ENCODE measurements at regions of chr13 and their contacts with region 1.

Region 1: DNA sequence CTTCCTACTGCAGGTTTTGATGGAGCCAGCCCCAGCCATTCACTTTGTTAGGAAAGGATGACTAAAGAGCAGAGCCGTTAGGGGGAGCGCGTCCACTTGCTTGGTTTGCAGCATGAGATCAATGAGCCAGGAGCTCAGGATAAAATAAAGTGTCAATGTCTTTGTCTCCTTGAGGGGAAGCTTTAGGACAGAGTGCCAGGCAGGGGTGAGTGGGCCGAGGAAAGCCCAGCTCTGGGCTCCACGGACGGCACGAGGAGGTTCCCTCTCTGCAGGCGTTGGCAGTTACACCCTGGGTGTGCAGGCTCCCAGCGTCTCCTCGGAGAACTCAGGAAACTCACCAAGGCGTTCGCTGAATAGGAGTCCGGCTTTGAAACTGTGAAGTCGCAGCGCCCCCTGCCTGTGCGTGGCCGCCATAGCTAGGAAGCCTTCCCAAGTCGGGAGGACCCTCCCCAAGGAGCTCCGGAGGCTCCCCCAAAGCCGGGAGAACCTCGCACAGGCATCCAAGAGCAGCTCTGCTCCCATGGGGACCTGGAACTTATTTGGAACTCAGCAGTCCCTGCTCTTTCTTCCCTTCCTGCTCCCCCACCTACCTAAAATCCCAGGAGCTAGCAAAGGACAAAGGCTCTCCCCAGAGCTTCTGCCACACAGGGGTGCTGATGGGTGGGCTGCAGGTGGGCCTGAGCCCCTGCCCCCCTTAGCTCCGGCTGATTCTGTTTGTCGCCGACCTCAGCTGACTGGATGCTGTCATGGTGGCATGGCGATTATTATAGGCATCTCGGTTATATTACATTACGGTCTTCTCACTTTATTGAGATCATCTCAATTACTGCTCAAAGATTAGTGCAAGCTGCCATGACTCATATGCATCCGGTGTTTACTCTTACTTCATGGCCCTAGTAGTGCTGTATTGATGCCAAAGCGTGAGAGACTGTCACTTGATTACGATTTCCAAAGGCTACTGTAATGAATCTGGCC is 34.4 kb downstream of the GSX1 start:
- DNase-seq: peak; percentile 43 to 70 (median 52)
- H3K4me3 ChIP-seq: no peak overlapping the region
- H3K4me3 Mint-ChIP-seq: no peak overlapping the region
- H3K27ac ChIP-seq: no peak overlapping the region
- H3K27ac Mint-ChIP-seq: no peak overlapping the region
- H3K4me1 ChIP-seq: peaks cover 11% of the 10 kb centered on the region
- H3K4me1 Mint-ChIP-seq: peaks cover 7 to 18% (median 16%) of the 10 kb centered on the region in 3 donors
- H3K27me3 ChIP-seq: peaks cover 13% of the 10 kb centered on the region
- H3K27me3 Mint-ChIP-seq: peaks cover 43 to 79% of the 10 kb centered on the region in 2 donors

Region 2: DNA sequence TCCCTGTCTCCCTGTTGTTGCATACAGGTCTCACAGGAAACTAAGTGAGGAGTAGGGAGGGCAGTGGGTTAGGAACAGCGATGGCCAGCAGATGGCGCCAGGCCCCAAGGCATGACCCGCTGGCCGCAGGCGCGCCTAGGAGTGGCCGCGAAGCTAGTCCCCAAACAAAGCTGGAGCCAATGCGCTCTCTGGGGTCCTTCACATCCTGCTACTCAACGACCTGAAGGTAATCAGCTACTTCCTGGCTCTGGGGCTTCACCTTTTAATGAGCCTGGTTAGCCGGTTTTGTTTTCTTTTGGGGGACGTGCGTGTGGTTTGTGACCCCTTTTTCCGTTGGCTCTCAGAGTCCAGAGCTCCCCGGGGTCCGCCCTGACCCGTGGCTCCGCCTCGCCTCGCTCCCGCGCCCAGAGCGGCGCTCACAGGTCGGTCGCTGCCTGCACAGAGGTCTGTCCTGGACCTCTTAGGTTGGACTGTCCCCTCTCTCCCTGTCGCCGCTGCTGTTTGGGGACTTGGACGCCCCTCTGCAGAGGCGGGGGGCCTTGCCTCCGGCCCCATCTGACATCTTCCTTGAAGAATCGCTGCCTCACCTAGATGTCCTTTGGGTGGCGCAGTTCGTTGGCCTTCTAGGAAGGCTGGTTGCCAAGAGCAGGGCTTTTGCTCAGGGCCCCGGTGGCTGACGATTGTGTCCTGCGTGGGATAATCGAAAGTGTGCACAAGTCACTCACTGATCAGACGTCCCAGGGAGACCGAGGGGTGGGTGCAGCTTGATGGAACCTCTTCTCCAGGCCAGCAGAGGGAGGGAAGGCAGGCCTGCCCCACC is 464.4 kb before region 1 on chr13:
- CTCF ChIA-PET with region 1: interaction called, 70 read pairs
- POLR2A ChIA-PET with region 1: no interaction called
- DNase-seq: peak; percentile 67 to 79 (median 69)
- H3K4me3 ChIP-seq: peak overlapping the region; percentile 58
- H3K4me3 Mint-ChIP-seq: peak overlapping the region; percentile 37 to 86 (median 56)
- H3K27ac ChIP-seq: no peak overlapping the region
- H3K27ac Mint-ChIP-seq: peak overlapping the region in 2 of 8 donors; percentile 56 to 79
- H3K4me1 ChIP-seq: peaks cover 8% of the 10 kb centered on the region
- H3K4me1 Mint-ChIP-seq: peaks cover 3 to 6% (median 6%) of the 10 kb centered on the region in 3 donors
- H3K27me3 ChIP-seq: peaks cover 4% of the 10 kb centered on the region
- H3K27me3 Mint-ChIP-seq: peaks cover 12 to 28% of the 10 kb centered on the region in 2 donors

Region 3: DNA sequence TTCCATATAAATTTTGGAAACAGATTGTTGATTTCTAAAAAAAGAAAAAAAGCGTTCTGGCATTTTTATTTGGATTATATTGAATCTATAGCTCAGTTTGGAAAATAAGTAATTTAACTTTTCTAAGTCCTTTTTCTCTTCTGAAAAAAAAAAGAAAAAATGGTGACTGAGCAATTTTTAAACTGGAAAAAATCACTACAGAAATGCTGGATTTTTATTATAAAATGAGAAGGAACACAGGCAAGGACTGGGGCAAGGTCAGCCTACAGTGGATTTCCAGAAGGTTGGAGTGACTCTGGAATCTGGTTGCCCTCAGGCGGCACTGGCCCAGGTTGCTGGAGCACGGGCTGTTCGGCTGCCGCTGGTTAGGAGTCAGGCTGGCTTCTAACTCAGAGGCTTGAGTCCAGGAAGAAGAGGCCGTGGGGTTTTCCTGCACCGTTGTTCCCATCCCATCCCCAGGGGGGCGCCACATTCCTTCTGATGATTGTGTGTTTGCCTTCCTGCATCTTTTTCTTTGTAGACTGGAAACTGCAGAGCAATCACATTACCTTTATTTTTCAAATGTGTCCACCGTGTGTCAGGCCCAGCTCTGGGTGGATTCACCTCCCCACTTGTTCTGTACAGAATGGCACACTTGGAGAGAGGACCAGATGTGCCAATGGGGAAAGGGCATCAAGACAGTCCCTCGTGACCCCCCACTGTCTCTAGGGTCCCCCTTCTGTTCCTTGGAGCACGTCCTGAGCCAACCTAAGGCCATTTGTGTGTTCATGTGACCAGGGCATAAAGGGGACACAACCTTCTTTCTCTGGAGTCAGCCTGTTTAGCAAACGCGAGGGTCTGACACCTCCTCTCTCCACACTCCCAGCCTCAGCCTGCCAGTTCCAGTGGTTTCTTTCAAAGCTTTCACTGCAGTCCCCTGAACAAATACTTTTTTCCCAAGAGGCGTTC is 446.7 kb before region 1 on chr13:
- CTCF ChIA-PET with region 1: interaction called, 74 read pairs
- POLR2A ChIA-PET with region 1: no interaction called
- DNase-seq: peak; percentile 20 to 60 (median 25)
- H3K4me3 ChIP-seq: no peak overlapping the region
- H3K4me3 Mint-ChIP-seq: no peak overlapping the region
- H3K27ac ChIP-seq: no peak overlapping the region
- H3K27ac Mint-ChIP-seq: no peak overlapping the region
- H3K4me1 ChIP-seq: no peaks in the 10 kb centered on the region
- H3K4me1 Mint-ChIP-seq: no peaks in the 10 kb centered on the region
- H3K27me3 ChIP-seq: no peaks in the 10 kb centered on the region
- H3K27me3 Mint-ChIP-seq: peaks cover 11 to 45% of the 10 kb centered on the region in 2 donors

Region 4: DNA sequence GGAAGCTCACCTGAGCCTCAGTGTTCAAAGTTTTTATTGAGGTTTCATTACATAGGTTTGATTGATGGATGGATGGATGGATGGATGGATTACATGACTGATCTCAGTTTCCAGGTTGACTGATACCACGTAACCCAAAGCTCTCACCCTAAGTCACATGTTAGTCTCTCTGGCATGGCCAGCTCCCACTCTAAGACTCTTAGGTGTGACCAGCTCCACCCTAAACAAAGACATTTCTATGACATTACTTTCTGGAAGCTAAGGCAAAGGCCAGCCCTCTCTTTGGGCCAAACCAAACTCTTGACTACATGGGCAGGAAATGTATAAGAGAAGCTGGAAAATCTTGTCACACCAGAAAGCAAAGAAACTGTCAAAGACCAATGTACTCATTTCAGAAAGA is 176.4 kb before region 1 on chr13:
- CTCF ChIA-PET with region 1: no interaction called
- POLR2A ChIA-PET with region 1: no interaction called
- DNase-seq: no peak
- H3K4me3 ChIP-seq: no peak overlapping the region
- H3K4me3 Mint-ChIP-seq: no peak overlapping the region
- H3K27ac ChIP-seq: no peak overlapping the region
- H3K27ac Mint-ChIP-seq: no peak overlapping the region
- H3K4me1 ChIP-seq: no peaks in the 10 kb centered on the region
- H3K4me1 Mint-ChIP-seq: peaks cover 10 to 24% (median 14%) of the 10 kb centered on the region in 3 donors
- H3K27me3 ChIP-seq: no peaks in the 10 kb centered on the region
- H3K27me3 Mint-ChIP-seq: no peaks in the 10 kb centered on the region

Region 5: DNA sequence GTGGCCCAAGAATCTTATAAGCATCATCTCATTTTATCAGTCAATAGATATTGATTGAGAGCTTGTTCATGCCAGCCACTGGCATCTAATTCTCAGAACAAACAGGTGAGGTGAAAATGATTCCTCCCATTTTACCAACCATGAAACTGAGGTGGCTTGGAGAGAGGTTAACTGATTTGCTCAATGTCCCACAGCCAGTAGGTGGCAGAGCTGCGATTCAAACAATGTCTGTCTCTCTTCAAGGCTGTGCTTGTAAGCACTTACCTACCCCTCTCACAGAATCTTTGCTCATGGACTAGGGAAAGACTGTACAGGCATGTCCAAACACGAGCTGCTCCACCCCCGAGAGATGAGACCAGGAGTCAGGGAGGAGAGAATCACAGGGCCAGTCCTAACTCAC is 55.9 kb before region 1 on chr13:
- CTCF ChIA-PET with region 1: interaction called, 21 read pairs
- POLR2A ChIA-PET with region 1: no interaction called
- DNase-seq: no peak
- H3K4me3 ChIP-seq: no peak overlapping the region
- H3K4me3 Mint-ChIP-seq: no peak overlapping the region
- H3K27ac ChIP-seq: no peak overlapping the region
- H3K27ac Mint-ChIP-seq: no peak overlapping the region
- H3K4me1 ChIP-seq: no peaks in the 10 kb centered on the region
- H3K4me1 Mint-ChIP-seq: no peaks in the 10 kb centered on the region
- H3K27me3 ChIP-seq: peaks cover 4% of the 10 kb centered on the region
- H3K27me3 Mint-ChIP-seq: peaks cover 11 to 74% of the 10 kb centered on the region in 2 donors

Region 6: GRCh38 chr13:27839809-27840467 is 13.3 kb after region 1 on chr13:
- CTCF ChIA-PET with region 1: interaction called, 16 read pairs
- POLR2A ChIA-PET with region 1: no interaction called
- DNase-seq: no peak
- H3K4me3 ChIP-seq: no peak overlapping the region
- H3K4me3 Mint-ChIP-seq: no peak overlapping the region
- H3K27ac ChIP-seq: no peak overlapping the region
- H3K27ac Mint-ChIP-seq: no peak overlapping the region
- H3K4me1 ChIP-seq: no peaks in the 10 kb centered on the region
- H3K4me1 Mint-ChIP-seq: no peaks in the 10 kb centered on the region
- H3K27me3 ChIP-seq: no peaks in the 10 kb centered on the region
- H3K27me3 Mint-ChIP-seq: peaks cover 18 to 63% of the 10 kb centered on the region in 2 donors

Region 7: GRCh38 chr13:27980280-27980998 is 153.8 kb after region 1 on chr13:
- CTCF ChIA-PET with region 1: interaction called, 76 read pairs
- POLR2A ChIA-PET with region 1: no interaction called
- DNase-seq: no peak
- H3K4me3 ChIP-seq: no peak overlapping the region
- H3K4me3 Mint-ChIP-seq: peak overlapping the region in 5 of 7 donors; percentile 50 to 88 (median 63)
- H3K27ac ChIP-seq: no peak overlapping the region
- H3K27ac Mint-ChIP-seq: peak overlapping the region in 1 of 8 donors; percentile 41
- H3K4me1 ChIP-seq: peaks cover 4% of the 10 kb centered on the region
- H3K4me1 Mint-ChIP-seq: peaks cover 11 to 34% (median 21%) of the 10 kb centered on the region in 3 donors
- H3K27me3 ChIP-seq: peaks cover 28% of the 10 kb centered on the region
- H3K27me3 Mint-ChIP-seq: peaks cover 52 to 76% of the 10 kb centered on the region in 2 donors

Region 8: GRCh38 chr13:28031220-28031895 is 204.7 kb after region 1 on chr13:
- CTCF ChIA-PET with region 1: no interaction called
- POLR2A ChIA-PET with region 1: no interaction called
- DNase-seq: no peak
- H3K4me3 ChIP-seq: no peak overlapping the region
- H3K4me3 Mint-ChIP-seq: no peak overlapping the region
- H3K27ac ChIP-seq: no peak overlapping the region
- H3K27ac Mint-ChIP-seq: peak overlapping the region in 1 of 8 donors; percentile 26
- H3K4me1 ChIP-seq: no peaks in the 10 kb centered on the region
- H3K4me1 Mint-ChIP-seq: peaks cover 0 to 11% (median 6%) of the 10 kb centered on the region in 3 donors
- H3K27me3 ChIP-seq: no peaks in the 10 kb centered on the region
- H3K27me3 Mint-ChIP-seq: peaks cover 21 to 48% of the 10 kb centered on the region in 2 donors